ENCODE measurements at regions of chr1 and their contacts with region 1.

Region 1: GRCh38 chr1:165392634-165393571 is 36.4 kb upstream of the LMX1A start:
- DNase-seq: peak; percentile 95
- ATAC-seq: peak; percentile 98
- H3K4me3 Mint-ChIP-seq: peak overlapping the region; percentile 65
- H3K27ac Mint-ChIP-seq: peak overlapping the region; percentile 88
- H3K4me1 Mint-ChIP-seq: peaks cover 25% of the 10 kb centered on the region
- H3K27me3 Mint-ChIP-seq: peaks cover 86% of the 10 kb centered on the region

Region 2: GRCh38 chr1:165173409-165173808 is 219.5 kb before region 1 on chr1:
- CTCF ChIA-PET with region 1: no interaction called
- DNase-seq: no peak
- ATAC-seq: no peak
- H3K4me3 Mint-ChIP-seq: no peak overlapping the region
- H3K27ac Mint-ChIP-seq: no peak overlapping the region
- H3K4me1 Mint-ChIP-seq: no peaks in the 10 kb centered on the region
- H3K27me3 Mint-ChIP-seq: peaks cover 3% of the 10 kb centered on the region

Region 3: DNA sequence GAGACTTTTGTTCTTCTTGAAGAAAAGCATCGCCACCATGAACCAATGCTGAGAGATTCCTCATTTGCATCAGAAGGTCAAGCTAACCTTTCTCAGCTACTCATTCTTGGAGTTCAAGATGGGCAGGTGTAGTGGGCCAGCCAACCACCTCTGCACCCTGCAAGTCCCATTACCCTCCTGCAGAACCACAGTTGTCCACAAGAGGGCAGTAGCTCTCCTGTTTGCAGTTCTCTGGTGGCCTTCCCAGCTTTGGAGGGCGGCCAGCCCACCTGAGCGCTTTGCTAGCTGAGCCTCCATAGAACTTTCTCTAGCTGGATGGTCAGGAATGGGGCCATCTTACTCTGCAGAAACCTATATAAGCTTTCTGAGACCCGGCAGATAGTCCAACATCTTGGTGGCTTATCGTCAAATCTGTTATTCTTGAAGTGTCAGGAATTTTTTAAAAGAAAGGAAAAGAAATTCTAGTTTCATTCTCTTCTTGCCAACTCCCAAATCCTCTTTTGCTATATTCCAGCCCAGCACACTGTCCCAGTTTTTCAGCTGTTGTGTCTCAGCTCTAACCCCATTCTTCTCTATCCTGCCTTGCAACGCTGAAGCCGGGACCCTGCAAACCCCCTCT is 25.4 kb before region 1 on chr1:
- CTCF ChIA-PET with region 1: interaction called, 18 read pairs
- DNase-seq: peak; percentile 85
- ATAC-seq: peak; percentile 47
- H3K4me3 Mint-ChIP-seq: no peak overlapping the region
- H3K27ac Mint-ChIP-seq: no peak overlapping the region
- H3K4me1 Mint-ChIP-seq: no peaks in the 10 kb centered on the region
- H3K27me3 Mint-ChIP-seq: peaks cover 80% of the 10 kb centered on the region

Region 4: DNA sequence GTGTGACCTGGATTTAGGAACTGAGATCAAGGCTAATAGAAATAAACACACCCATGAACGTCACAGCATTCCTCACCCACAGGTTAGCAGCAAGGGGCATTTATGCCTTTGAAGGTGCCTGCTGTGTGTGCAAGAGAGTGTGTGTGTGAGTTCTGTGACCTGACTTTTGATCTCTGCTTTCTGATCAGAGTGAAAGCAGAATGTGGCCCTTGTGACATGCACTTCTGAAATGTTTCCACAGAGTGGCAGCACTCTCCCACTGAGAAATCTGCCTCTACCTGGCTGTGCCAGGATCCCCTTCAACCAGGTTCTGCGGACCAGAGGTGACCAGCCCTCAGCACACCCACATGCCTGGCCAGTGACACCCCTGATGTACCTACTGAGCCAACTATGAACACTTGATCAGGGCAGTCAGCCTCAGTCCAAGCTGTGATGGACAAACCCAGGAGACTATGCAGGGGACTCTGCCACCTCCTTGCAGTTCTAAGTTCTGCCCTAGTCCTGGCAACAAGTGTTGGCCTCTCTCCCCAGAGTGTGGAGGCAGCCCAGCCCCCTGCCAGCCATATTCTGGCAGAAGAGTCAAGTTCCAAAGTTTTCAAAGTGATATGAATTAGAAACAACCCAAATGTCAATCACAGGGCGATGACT is 11.1 kb after region 1 on chr1:
- CTCF ChIA-PET with region 1: interaction called, 15 read pairs
- DNase-seq: peak; percentile 61
- ATAC-seq: peak; percentile 70
- H3K4me3 Mint-ChIP-seq: no peak overlapping the region
- H3K27ac Mint-ChIP-seq: no peak overlapping the region
- H3K4me1 Mint-ChIP-seq: peaks cover 2% of the 10 kb centered on the region
- H3K27me3 Mint-ChIP-seq: peaks cover 41% of the 10 kb centered on the region

Region 5: DNA sequence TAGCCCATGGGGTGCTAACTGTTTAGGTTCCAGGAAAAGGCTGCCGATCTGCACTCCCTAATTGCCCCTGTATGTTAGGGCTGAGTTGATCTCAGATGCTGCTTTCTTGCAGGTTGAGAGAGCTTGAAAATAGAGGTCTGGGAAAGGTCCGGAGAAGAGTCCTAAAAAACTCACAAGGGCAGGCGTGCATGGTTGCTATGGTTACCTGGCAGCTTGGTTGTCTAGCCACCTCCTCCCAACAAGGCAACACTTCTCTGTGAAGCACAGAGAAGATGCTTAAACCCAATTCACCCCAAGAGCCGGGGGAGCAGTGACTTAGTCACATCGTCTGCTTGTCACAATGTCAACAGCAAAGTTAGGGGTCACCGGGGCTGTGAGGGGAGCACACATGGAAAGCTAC is 119.9 kb after region 1 on chr1:
- CTCF ChIA-PET with region 1: no interaction called
- DNase-seq: no peak
- ATAC-seq: no peak
- H3K4me3 Mint-ChIP-seq: no peak overlapping the region
- H3K27ac Mint-ChIP-seq: no peak overlapping the region
- H3K4me1 Mint-ChIP-seq: no peaks in the 10 kb centered on the region
- H3K27me3 Mint-ChIP-seq: peaks cover 16% of the 10 kb centered on the region

Region 6: GRCh38 chr1:165586435-165586834 is 193.5 kb after region 1 on chr1:
- CTCF ChIA-PET with region 1: interaction called, 177 read pairs
- DNase-seq: no peak
- ATAC-seq: no peak
- H3K4me3 Mint-ChIP-seq: no peak overlapping the region
- H3K27ac Mint-ChIP-seq: no peak overlapping the region
- H3K4me1 Mint-ChIP-seq: no peaks in the 10 kb centered on the region
- H3K27me3 Mint-ChIP-seq: peaks cover 61% of the 10 kb centered on the region

Region 7: GRCh38 chr1:165597883-165598675 is 205.2 kb after region 1 on chr1:
- CTCF ChIA-PET with region 1: interaction called, 177 read pairs
- DNase-seq: peak; percentile 98
- ATAC-seq: peak; percentile 99
- H3K4me3 Mint-ChIP-seq: peak overlapping the region; percentile 84
- H3K27ac Mint-ChIP-seq: peak overlapping the region; percentile 86
- H3K4me1 Mint-ChIP-seq: peaks cover 34% of the 10 kb centered on the region
- H3K27me3 Mint-ChIP-seq: peaks cover 37% of the 10 kb centered on the region

Measured in activated CD8-positive, alpha-beta memory T cell treated with anti-CD3 and anti-CD28 coated beads, Interleukin-2, amount 10 ng/mL, durations not matched to agents 7 days and 5 days (primary cell).